Activated B cell treated with CpG ODN at 0.5 μM for 24 hours (primary cell): ENCODE measurements at regions of chr1 and their contacts with region 1.

Region 1: GRCh38 chr1:151189638-151190445 is at the start of gene VPS72:
- DNase-seq: peak; percentile 73
- ATAC-seq: peak; percentile 93
- H3K4me3 Mint-ChIP-seq: peak within 1 kb of the TSS; percentile 100
- H3K27ac Mint-ChIP-seq: peak within 1 kb of the TSS; percentile 99
- H3K4me1 Mint-ChIP-seq: peaks cover 34% of the 10 kb centered on the region
- H3K27me3 Mint-ChIP-seq: no peaks in the 10 kb centered on the region
- CTCF ChIP-seq: no peak
- total RNA-seq, gene VPS72: 58.8 and 72.1 TPM in 2 replicates

Region 2: GRCh38 chr1:150718225-150718891 is 471.5 kb before region 1 on chr1:
- CTCF ChIA-PET with region 1: no interaction called
- POLR2A ChIA-PET with region 1: no interaction called
- intact Hi-C with region 1: no loop called
- DNase-seq: no peak
- ATAC-seq: no peak
- H3K4me3 Mint-ChIP-seq: no peak overlapping the region
- H3K27ac Mint-ChIP-seq: no peak overlapping the region
- H3K4me1 Mint-ChIP-seq: no peaks in the 10 kb centered on the region
- H3K27me3 Mint-ChIP-seq: no peaks in the 10 kb centered on the region
- CTCF ChIP-seq: no peak

Region 3: GRCh38 chr1:150876119-150876454 is 313.8 kb before region 1 on chr1:
- CTCF ChIA-PET with region 1: no interaction called
- POLR2A ChIA-PET with region 1: no interaction called
- intact Hi-C with region 1: loop called (anchors 1 kb)
- DNase-seq: no peak
- ATAC-seq: peak; percentile 32
- H3K4me3 Mint-ChIP-seq: peak overlapping the region; percentile 92
- H3K27ac Mint-ChIP-seq: peak overlapping the region; percentile 88
- H3K4me1 Mint-ChIP-seq: peaks cover 31% of the 10 kb centered on the region
- H3K27me3 Mint-ChIP-seq: no peaks in the 10 kb centered on the region
- CTCF ChIP-seq: no peak

Region 4: GRCh38 chr1:151156515-151156819 is 33.4 kb before region 1 on chr1 and contains the start of gene TNFAIP8L2:
- CTCF ChIA-PET with region 1: no interaction called
- POLR2A ChIA-PET with region 1: interaction called, 22 read pairs
- intact Hi-C with region 1: no loop called
- DNase-seq: peak; percentile 58
- ATAC-seq: peak; percentile 88
- H3K4me3 Mint-ChIP-seq: peak within 1 kb of the TSS; percentile 96
- H3K27ac Mint-ChIP-seq: peak within 1 kb of the TSS; percentile 95
- H3K4me1 Mint-ChIP-seq: peaks cover 44% of the 10 kb centered on the region
- H3K27me3 Mint-ChIP-seq: no peaks in the 10 kb centered on the region
- CTCF ChIP-seq: no peak
- total RNA-seq, gene TNFAIP8L2: 8.5 and 9.3 TPM in 2 replicates

Region 5: GRCh38 chr1:151281969-151282882 is 92.4 kb after region 1 on chr1 and contains the start of gene ZNF687:
- CTCF ChIA-PET with region 1: no interaction called
- POLR2A ChIA-PET with region 1: interaction called, 12 read pairs
- intact Hi-C with region 1: no loop called
- DNase-seq: peak; percentile 96
- ATAC-seq: peak; percentile 88
- H3K4me3 Mint-ChIP-seq: peak within 1 kb of the TSS; percentile 99
- H3K27ac Mint-ChIP-seq: peak within 1 kb of the TSS; percentile 99
- H3K4me1 Mint-ChIP-seq: peaks cover 54% of the 10 kb centered on the region
- H3K27me3 Mint-ChIP-seq: no peaks in the 10 kb centered on the region
- CTCF ChIP-seq: no peak
- total RNA-seq, gene ZNF687: 38.8 and 40.3 TPM in 2 replicates

Region 6: DNA sequence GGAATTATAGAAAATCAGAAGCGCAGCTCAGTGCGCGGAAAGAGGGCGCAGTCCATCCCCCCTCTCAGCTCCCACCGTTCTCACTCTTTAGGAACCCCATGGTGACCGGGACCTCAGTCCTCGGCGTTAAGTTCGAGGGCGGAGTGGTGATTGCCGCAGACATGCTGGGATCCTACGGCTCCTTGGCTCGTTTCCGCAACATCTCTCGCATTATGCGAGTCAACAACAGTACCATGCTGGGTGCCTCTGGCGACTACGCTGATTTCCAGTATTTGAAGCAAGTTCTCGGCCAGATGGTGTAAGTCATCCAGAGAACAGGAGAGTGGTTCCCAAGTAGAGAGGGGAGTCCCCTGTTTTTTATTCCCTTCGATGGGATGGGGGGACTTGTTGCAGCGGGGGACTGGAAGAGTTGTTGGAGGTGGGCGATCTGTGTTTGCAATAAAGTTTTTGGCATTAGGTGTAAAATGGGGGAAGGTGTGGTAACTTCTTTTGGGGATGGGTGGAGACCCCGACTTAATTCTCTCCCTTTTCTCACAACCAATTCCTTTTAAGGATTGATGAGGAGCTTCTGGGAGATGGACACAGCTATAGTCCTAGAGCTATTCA is 210.2 kb after region 1 on chr1:
- CTCF ChIA-PET with region 1: no interaction called
- POLR2A ChIA-PET with region 1: interaction called, 10 read pairs
- intact Hi-C with region 1: no loop called
- DNase-seq: no peak
- ATAC-seq: peak; percentile 3
- H3K4me3 Mint-ChIP-seq: peak overlapping the region; percentile 89
- H3K27ac Mint-ChIP-seq: peak overlapping the region; percentile 98
- H3K4me1 Mint-ChIP-seq: peaks cover 31% of the 10 kb centered on the region
- H3K27me3 Mint-ChIP-seq: no peaks in the 10 kb centered on the region
- CTCF ChIP-seq: no peak

Region 7: DNA sequence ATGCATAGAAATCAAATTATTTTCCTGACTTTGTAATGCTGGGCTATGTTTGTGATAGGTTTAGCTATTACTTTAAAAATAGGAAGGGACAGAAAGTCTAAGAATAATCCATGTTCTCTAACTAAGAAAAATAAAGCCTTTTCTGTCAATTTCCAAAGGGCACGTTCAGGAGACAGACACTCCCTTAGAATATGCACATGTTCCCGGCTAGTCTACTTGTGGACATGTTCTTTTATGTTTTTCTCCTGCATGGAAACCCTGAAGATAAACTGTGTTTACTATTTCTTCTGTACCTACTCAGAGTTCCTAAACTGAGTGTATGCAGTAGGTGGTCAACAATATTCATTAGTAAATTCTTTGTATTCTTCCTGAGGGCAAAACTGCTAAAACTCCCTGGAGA is 222.0 kb after region 1 on chr1:
- CTCF ChIA-PET with region 1: no interaction called
- POLR2A ChIA-PET with region 1: no interaction called
- intact Hi-C with region 1: no loop called
- DNase-seq: no peak
- ATAC-seq: no peak
- H3K4me3 Mint-ChIP-seq: no peak overlapping the region
- H3K27ac Mint-ChIP-seq: no peak overlapping the region
- H3K4me1 Mint-ChIP-seq: no peaks in the 10 kb centered on the region
- H3K27me3 Mint-ChIP-seq: no peaks in the 10 kb centered on the region
- CTCF ChIP-seq: no peak